ENCODE measurements at regions of chr9 and their contacts with region 1.

Region 1: GRCh38 chr9:6757456-6758247 is at the start of gene KDM4C:
- DNase-seq: peak; percentile 96 to 97
- H3K4me3 ChIP-seq: peak within 1 kb of the TSS; percentile 83 to 98
- H3K27ac ChIP-seq: peak within 1 kb of the TSS; percentile 93 to 99
- H3K4me1 ChIP-seq: peaks cover 0 to 14% (median 7%) of the 10 kb centered on the region in 4 donors
- H3K27me3 ChIP-seq: no peaks in the 10 kb centered on the region
- CTCF ChIP-seq: no peak

Region 2: DNA sequence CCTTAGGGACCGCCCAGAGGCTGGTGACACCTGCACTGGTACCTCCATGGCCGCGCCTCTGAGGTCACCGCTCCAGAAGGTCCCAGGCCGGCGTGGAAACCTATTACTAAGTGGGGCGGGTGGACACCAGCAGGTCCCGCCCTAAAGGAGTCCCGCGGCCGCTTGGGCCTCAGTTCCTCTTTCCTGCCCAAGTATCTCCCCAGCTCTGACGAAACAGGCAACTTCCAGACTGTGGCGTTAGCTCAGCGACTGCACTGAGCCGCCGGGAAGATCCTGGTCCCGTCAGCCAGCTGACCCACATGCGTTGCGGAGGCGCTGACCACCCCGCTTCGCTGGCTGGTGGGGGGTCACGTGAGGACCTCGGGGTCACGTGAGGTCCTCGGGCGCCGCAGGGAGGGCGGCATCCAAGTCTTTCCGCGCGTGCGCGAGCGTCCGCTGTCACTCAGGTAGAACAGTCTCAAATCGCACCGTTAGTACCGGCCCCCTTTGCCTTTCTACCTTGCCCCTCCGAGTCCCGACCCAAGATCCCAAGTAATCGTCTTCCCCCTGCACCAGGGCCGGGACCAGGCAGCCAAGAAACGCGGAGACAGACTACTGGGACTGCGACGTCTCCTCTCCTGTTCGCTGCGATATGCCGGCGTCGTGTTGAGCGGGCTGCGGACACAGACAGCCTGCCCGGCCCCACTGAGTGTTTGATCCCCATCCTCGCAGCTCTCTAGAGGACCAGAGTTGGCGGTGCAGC is 53.6 kb before region 1 on chr9:
- intact Hi-C with region 1: loop called (anchors 5 kb)
- DNase-seq: peak; percentile 48 to 85
- H3K4me3 ChIP-seq: peak overlapping the region; percentile 54 to 60
- H3K27ac ChIP-seq: peak overlapping the region; percentile 36 to 74
- H3K4me1 ChIP-seq: peaks cover 0 to 3% (median 1%) of the 10 kb centered on the region in 4 donors
- H3K27me3 ChIP-seq: no peaks in the 10 kb centered on the region
- CTCF ChIP-seq: no peak

Measured in tibial artery (tissue), 4 donors.